Endothelial cell of umbilical vein (primary cell): ENCODE measurements at regions of chr16 and their contacts with region 1.

Region 1: DNA sequence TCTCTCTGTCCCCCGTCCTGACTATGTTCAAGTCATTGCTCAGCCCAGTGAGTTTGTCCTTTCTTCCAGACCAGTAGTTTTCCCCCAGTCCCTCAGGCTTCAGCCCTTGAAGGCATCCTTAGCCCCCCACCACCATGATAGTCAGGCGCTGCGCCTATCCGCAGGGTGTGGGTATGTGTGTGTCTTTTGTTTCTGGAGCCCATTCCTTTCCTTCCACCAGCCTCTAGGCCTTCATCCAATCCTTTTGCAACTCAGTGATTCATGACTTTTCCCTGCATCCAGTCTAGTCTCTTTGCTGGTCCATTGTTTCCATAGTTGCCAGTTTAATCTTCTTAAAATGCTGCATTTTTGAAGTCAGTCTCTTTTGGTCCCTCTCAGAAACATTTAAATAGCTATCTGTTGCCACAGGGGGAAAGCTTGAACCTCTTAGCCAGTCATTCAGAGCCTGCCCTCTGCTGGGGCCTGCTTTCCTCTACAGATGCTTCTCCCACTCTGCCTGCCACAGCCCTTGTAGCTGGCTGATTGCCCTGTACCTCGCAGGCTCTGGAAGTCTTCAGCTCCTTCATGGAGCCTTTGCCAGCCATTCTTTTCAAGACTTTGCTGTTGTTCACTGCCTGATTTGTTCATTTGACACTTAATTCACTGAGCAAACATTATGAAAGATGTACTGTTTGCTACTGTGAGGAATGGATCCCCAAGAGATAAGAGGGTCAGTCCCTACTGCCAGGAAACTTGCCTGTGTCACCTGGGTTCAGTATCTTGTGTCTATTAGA is 55.9 kb upstream of the ADCY7 start:
- DNase-seq: peak; percentile 86
- H3K4me3 ChIP-seq: no peak overlapping the region
- H3K27ac ChIP-seq: no peak overlapping the region
- H3K4me1 ChIP-seq: peaks cover 22% of the 10 kb centered on the region
- H3K27me3 ChIP-seq: no peaks in the 10 kb centered on the region
- CTCF ChIP-seq: peak; percentile 71 to 80
- POLR2A ChIP-seq: no peak

Region 2: DNA sequence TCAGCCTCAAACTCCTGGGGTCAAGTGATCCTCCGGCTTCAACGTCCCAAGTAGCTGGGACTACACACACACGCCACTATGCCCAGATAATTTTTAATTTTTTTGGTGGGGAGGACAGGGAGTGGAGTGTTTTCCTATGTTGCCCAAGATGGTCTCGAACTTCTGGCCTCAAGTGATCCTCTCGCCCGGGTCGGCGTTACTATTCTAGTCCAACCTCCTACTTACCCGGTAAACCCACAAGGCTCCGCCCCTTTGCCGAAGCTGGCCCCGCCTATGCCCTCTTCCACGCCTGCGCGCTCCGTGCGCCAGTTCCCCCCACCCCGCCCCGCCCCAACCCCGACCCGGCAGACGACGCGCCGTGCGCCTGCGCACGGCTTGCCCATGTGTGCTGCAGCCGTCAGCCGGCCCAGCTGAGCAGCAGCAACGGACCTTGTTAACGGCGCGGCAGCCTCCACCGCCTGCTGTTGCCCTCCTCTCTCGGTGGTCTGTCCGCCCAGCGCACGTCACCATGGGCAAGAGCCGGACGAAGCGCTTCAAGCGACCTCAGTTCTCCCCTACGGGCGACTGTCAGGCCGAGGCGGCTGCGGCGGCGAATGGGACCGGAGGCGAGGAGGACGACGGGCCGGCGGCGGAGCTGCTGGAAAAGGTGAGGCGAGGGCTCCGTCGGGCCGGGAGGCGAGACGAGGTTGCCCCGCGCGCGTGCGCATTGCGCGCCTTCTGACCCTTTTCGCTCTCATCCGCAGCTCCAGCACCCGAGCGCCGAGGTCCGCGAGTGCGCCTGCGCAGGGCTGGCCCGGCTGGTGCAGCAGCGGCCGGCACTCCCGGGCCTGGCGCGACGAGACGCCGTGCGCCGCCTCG is 144.6 kb before region 1 on chr16 and contains the start of gene HEATR3:
- CTCF ChIA-PET with region 1: interaction called, 193 read pairs
- POLR2A ChIA-PET with region 1: no interaction called
- dilution Hi-C with region 1: no loop called
- intact Hi-C with region 1: loop called (anchors 1 kb)
- DNase-seq: peak; percentile 95
- H3K4me3 ChIP-seq: peak within 1 kb of the TSS; percentile 76 to 82 (median 76)
- H3K27ac ChIP-seq: peak within 1 kb of the TSS; percentile 67
- H3K4me1 ChIP-seq: peaks cover 27% of the 10 kb centered on the region
- H3K27me3 ChIP-seq: no peaks in the 10 kb centered on the region
- CTCF ChIP-seq: no peak
- POLR2A ChIP-seq: peak; percentile 39
- total RNA-seq, gene HEATR3: 17.0 and 23.1 TPM in 2 replicates

Region 3: GRCh38 chr16:50102051-50102746 is 108.3 kb before region 1 on chr16:
- CTCF ChIA-PET with region 1: interaction called, 18 read pairs
- POLR2A ChIA-PET with region 1: no interaction called
- dilution Hi-C with region 1: no loop called
- intact Hi-C with region 1: no loop called
- DNase-seq: no peak
- H3K4me3 ChIP-seq: no peak overlapping the region
- H3K27ac ChIP-seq: no peak overlapping the region
- H3K4me1 ChIP-seq: no peaks in the 10 kb centered on the region
- H3K27me3 ChIP-seq: no peaks in the 10 kb centered on the region
- CTCF ChIP-seq: no peak
- POLR2A ChIP-seq: no peak

Region 4: DNA sequence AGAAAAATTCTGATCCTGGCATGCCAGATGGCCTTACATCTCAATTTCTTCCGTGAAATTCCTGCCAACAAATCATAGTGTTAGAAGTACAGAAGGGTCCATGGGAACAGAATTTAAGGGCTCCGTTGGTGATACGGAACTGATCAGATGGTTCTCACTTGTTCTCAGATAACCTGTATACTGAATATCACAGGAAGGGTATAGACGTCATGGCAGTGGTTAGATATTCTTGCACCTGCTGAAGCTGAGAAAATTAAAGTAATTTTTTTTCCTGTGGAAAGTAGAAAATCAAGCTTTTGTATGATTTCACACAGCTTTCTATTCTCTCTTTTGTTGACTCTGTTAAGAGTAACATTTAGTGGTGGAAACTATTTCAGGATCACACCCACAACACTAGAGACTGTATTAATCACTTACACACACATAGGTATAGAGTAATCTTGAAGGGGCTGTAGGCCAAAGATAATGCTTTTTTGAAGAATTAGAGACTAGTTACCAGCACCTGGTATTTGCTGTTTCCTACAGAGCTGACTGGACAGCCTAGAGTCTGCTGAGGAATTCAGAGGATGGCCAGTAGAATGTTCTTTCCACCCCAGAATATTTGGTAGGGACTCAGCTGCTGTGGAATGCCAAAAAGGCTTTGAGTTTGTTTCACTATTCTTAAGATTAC is 49.8 kb before region 1 on chr16:
- CTCF ChIA-PET with region 1: interaction called, 55 read pairs
- POLR2A ChIA-PET with region 1: no interaction called
- dilution Hi-C with region 1: no loop called
- intact Hi-C with region 1: no loop called
- DNase-seq: no peak
- H3K4me3 ChIP-seq: no peak overlapping the region
- H3K27ac ChIP-seq: no peak overlapping the region
- H3K4me1 ChIP-seq: peaks cover 4% of the 10 kb centered on the region
- H3K27me3 ChIP-seq: no peaks in the 10 kb centered on the region
- CTCF ChIP-seq: no peak
- POLR2A ChIP-seq: no peak

Region 5: DNA sequence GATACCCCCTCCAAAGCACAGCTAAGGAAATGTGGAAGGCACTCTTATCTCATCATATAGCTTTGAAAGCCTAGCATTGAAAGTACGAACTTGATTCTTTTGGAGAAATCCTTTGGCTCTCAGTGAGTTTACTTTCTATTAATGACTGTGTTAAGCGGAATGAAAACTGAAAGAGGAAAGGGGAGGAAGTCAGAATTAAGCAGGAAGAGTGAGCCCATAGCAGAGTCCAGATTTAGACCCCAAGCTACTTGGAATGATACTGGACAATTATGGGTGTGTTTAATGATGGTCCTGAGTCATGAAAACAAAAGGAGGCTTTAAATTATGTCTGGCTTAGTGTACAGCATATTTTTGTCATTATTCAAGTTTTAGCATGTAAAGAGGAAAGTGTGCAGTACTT is 15.2 kb before region 1 on chr16:
- CTCF ChIA-PET with region 1: interaction called, 45 read pairs
- POLR2A ChIA-PET with region 1: no interaction called
- dilution Hi-C with region 1: no loop called
- intact Hi-C with region 1: no loop called
- DNase-seq: peak; percentile 56
- H3K4me3 ChIP-seq: peak overlapping the region in 2 of 3 experiments; percentile 18 to 50
- H3K27ac ChIP-seq: peak overlapping the region; percentile 63
- H3K4me1 ChIP-seq: peaks cover 12% of the 10 kb centered on the region
- H3K27me3 ChIP-seq: no peaks in the 10 kb centered on the region
- CTCF ChIP-seq: no peak
- POLR2A ChIP-seq: no peak

Region 6: DNA sequence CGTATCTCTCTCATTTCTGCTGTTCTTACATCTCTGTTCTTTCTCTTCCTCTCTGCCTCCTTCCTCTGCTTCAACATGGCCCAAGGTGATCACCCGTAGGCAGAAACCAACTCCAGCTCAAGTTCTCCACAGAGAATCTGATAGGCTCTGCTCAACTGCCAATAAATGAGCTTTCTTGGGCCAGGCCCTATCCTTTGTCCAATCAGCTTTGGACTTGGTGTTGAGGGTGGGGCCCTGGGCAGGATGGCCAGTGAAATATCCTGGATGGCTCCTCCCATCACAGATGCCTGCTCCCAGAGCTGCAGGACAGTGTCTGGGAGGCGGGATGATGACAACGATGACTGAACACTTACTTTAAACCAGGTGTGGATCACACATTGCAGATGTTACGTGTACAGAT is 175.7 kb after region 1 on chr16:
- CTCF ChIA-PET with region 1: no interaction called
- POLR2A ChIA-PET with region 1: no interaction called
- dilution Hi-C with region 1: no loop called
- intact Hi-C with region 1: no loop called
- DNase-seq: no peak
- H3K4me3 ChIP-seq: no peak overlapping the region
- H3K27ac ChIP-seq: no peak overlapping the region
- H3K4me1 ChIP-seq: no peaks in the 10 kb centered on the region
- H3K27me3 ChIP-seq: no peaks in the 10 kb centered on the region
- CTCF ChIP-seq: no peak
- POLR2A ChIP-seq: no peak

Region 7: GRCh38 chr16:50741808-50742575 is 531.5 kb after region 1 on chr16 and contains the start of gene CYLD:
- CTCF ChIA-PET with region 1: no interaction called
- POLR2A ChIA-PET with region 1: no interaction called
- dilution Hi-C with region 1: no loop called
- intact Hi-C with region 1: loop called (anchors 10 kb)
- DNase-seq: peak; percentile 100
- H3K4me3 ChIP-seq: peak within 1 kb of the TSS; percentile 63 to 92 (median 79)
- H3K27ac ChIP-seq: peak within 1 kb of the TSS; percentile 62
- H3K4me1 ChIP-seq: peaks cover 11% of the 10 kb centered on the region
- H3K27me3 ChIP-seq: peaks cover 2 to 3% of the 10 kb centered on the region in 2 experiments
- CTCF ChIP-seq: no peak
- POLR2A ChIP-seq: no peak
- total RNA-seq, gene CYLD: 21.5 and 22.2 TPM in 2 replicates